Activated T-helper 2 cell treated with anti-CD3 and anti-CD28 coated beads, Interferon-gamma antibody, Interleukin-2, Interleukin-4, amounts not matched to agents 10 μg/mL and 5 μg/mL and 100 μg/mL, durations not matched to agents 14 hours and 24 hours and 36 hours (primary cell): ENCODE measurements at regions of chr2 and their contacts with region 1.

Region 1: DNA sequence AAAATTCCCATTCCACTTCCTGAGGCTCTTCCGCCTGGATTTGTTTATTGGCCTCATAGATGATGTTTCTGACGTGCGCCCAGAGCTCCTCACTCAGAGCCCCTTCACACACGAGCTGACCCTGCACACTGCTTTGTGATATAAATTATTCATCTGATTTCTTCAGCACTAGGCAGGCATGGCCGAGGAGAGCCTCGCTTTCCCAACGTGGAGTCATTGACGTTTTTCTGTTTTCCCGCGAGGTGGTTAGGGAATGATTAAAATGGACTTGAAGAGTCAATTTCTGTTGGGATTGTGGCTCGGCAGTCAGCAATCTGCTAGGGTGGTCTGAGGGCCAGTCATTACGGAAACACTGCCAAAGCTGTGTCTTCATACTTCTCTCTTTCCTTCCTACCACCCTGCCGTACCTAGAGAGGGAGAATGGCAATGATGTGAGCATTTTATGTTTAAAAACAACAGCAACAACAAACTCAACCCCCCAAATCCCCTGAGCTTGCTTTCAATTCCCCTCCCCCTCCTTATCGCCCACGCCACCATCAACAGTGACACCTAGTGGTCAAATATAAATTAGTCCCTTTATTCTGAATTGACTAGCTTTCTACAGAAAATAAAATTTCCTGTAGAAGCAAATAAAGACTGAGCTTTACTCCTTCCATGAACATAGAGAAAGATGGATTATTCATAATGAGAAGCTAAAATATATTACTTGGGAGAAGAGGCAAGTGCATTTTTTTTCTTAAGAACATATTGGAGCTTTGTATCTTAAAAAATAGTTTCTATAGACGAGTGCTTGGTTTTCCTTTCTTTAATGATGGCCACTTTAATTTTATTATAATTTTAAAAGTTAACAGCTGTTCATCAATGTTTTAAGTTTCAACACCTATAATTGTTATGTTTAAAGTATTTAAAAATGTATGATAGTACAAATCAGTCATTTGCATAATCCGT is 285.1 kb downstream of the MTX2 start:
- DNase-seq: no peak
- H3K4me3 Mint-ChIP-seq: peak overlapping the region; percentile 73
- H3K27ac Mint-ChIP-seq: peak overlapping the region; percentile 4
- H3K4me1 Mint-ChIP-seq: peaks cover 11% of the 10 kb centered on the region
- H3K27me3 Mint-ChIP-seq: peaks cover 44% of the 10 kb centered on the region

Region 2: GRCh38 chr2:176187899-176188773 is 366.2 kb before region 1 on chr2 and contains the start of gene HOXD1:
- intact Hi-C with region 1: loop called (anchors 2 kb)
- DNase-seq: no peak
- H3K4me3 Mint-ChIP-seq: peak within 1 kb of the TSS; percentile 76
- H3K27ac Mint-ChIP-seq: no peak within 1 kb of the TSS
- H3K4me1 Mint-ChIP-seq: peaks cover 10% of the 10 kb centered on the region
- H3K27me3 Mint-ChIP-seq: peaks cover 74% of the 10 kb centered on the region
- total RNA-seq, gene HOXD1: not detected in 2 replicates

Region 3: DNA sequence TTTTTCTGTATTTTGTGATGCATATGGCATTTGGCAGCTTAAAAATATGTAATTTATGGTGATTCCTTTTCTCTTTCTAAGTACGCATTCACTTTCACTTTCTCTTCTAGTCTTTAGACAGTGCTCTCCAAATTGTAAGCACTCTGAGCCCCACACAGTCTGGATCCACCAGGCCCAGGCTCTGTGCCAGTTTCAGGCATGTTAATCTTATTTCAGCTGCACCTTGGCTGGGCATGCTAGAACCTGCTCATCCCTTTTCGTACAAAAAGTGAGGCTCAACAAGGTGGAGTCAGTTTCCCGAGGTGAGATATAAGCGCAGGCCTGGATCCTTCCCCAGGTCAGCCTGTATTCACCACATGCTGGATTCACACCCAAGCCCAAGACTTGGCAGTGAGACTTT is 81.2 kb before region 1 on chr2:
- intact Hi-C with region 1: loop called (anchors 5 kb)
- DNase-seq: no peak
- H3K4me3 Mint-ChIP-seq: peak overlapping the region; percentile 58
- H3K27ac Mint-ChIP-seq: no peak overlapping the region
- H3K4me1 Mint-ChIP-seq: peaks cover 27% of the 10 kb centered on the region
- H3K27me3 Mint-ChIP-seq: peaks cover 21% of the 10 kb centered on the region

Region 4: GRCh38 chr2:176638167-176639015 is 84.0 kb after region 1 on chr2:
- intact Hi-C with region 1: loop called (anchors 5 kb)
- DNase-seq: peak; percentile 29
- H3K4me3 Mint-ChIP-seq: peak overlapping the region; percentile 61
- H3K27ac Mint-ChIP-seq: no peak overlapping the region
- H3K4me1 Mint-ChIP-seq: peaks cover 5% of the 10 kb centered on the region
- H3K27me3 Mint-ChIP-seq: peaks cover 60% of the 10 kb centered on the region